ENCODE measurements at regions of chr2 and their contacts with region 1.

Region 1: DNA sequence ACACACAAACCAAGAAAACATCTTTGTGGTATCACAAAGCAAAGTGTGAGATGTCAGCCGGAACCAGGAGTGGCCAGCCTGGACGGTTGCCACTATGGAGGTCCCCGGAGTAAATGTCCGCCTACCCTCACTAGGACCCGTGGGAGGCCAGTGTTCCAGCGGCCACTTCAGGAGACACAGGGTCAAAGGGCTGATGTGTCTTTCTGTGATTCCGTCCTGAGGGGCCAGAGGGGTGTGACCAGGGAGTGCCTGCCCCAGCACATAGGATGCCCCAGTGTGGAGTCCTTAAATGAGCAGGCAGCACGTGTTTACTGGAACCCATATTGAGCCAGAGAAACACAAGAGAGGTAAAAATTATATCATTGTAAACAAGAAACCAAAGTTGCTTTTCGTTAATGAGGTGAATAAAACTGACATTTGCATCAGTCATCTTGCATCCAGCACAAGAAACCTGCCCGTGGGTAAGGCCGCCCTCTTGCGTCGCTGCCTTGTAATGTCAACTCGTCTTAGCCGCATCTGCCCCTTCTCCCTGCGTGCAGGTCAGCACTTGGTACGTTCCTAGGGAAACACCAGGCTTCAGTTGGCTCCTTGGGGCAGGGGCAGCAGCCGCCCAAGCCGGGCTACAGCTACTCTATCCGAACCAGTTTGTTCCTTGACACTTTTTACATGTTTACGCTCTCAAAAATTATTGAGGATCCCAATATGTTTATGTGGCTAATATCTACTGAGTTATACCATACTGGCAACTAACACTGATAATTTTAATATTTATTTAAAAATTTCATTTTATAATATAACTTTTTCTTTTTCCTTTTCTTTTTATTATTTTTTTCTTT is 46.7 kb upstream of the LAPTM4A start:
- DNase-seq: peak; percentile 89
- ATAC-seq: peak; percentile 93

Region 2: DNA sequence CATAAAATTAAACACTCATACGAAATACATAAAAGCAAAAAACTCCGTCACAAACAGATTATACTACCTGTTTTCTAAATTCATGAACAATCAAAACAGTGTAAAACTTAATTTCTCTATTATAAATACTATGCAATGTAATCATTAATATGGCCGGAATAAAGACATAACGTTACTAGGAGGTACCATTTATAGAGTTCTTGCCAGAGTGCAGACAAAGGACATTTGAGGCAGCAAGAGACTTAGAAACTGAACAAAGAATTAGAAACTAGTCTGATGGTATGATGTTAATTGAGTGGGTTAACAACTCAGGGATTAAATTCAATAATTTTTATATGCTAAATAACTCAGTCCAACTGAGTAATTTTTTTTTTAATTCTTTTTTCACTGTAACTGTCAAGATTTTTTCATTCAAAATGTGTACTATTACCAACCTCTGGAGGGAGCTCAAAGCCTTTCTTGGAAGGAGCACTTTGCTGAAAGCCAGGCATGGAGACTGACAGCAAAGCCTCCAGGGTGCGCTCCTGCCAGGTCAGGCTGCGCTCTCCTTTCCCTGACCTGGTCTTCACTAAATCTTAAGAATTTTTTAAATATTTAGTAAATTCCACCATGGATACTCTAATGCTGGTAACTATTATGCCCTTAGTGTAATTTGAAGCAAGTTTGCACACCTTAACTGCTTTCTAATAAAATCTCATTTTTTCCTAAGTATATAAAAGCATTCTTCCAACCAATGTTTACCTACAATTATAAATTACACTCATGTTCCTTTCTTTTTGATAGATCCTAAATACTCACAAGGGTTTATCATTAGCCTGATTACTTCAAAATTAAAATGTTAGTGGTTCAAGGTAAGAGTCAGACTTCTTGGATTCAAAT is 142.3 kb before region 1 on chr2:
- intact Hi-C with region 1: loop called (anchors 5 kb)
- DNase-seq: peak; percentile 46
- ATAC-seq: peak; percentile 89

Region 3: GRCh38 chr2:20015472-20016083 is 82.5 kb before region 1 on chr2:
- intact Hi-C with region 1: loop called (anchors 1 kb)
- DNase-seq: no peak
- ATAC-seq: peak; percentile 61

Region 4: DNA sequence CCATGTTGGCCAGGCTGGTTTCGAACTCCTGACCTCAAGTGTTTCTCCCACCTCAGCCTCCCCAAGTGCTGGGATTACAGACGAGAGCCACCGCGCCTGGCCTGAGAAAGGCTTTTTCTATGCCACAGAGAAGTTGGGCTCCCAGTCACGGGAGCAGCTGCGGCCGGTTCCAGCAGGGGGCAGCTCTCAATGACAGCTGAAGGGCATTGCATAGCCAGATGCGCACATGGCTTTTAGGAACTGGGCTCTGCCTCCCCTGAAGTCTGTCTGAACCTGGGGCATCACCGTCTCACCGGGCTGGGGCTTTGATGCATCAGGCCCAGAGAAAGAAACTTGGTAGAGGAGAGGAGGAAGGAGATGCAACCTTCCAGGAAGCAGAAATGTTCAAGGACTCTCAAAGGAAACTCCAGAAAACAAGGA is 37.5 kb after region 1 on chr2:
- intact Hi-C with region 1: no loop called
- DNase-seq: peak; percentile 64
- ATAC-seq: peak; percentile 72

Measured in Right ventricle myocardium superior (tissue), 1 donor.